Activated CD4-positive, alpha-beta T cell treated with anti-CD3 and anti-CD28 coated beads for 36 hours (primary cell): ENCODE measurements at regions of chr1 and their contacts with region 1.

Region 1: DNA sequence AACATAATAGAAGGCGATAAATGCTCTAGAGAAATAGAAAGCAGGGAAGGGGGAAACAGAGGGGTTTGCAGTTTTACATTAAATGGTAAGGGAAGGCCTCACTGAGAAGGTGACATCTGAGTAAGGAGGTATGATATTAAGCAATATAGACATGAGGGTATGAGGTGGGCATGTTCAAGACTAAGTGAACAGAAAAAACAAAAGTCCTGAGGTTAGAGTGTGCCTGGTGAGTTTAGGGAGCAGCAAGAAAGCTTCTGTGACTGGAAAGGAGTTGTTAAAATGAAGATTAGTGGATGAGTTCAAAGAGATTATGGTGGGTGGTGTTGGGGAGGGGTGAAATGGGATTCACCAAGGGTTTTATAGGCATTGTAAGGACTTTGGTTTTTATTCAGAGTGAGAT is 8.6 kb downstream of the RPRD2 start:
- DNase-seq: no peak
- ATAC-seq: peak; percentile 69
- H3K4me3 Mint-ChIP-seq: no peak overlapping the region
- H3K27ac Mint-ChIP-seq: peak overlapping the region; percentile 80
- H3K4me1 Mint-ChIP-seq: peaks cover 76% of the 10 kb centered on the region
- H3K27me3 Mint-ChIP-seq: no peaks in the 10 kb centered on the region

Region 2: GRCh38 chr1:149995951-149996350 is 376.6 kb before region 1 on chr1:
- CTCF ChIA-PET with region 1: no interaction called
- POLR2A ChIA-PET with region 1: no interaction called
- intact Hi-C with region 1: no loop called
- DNase-seq: peak; percentile 39
- ATAC-seq: peak; percentile 92
- H3K4me3 Mint-ChIP-seq: peak overlapping the region; percentile 20
- H3K27ac Mint-ChIP-seq: peak overlapping the region; percentile 80
- H3K4me1 Mint-ChIP-seq: peaks cover 46% of the 10 kb centered on the region
- H3K27me3 Mint-ChIP-seq: no peaks in the 10 kb centered on the region

Region 3: GRCh38 chr1:150387200-150387599 is 14.6 kb after region 1 on chr1:
- CTCF ChIA-PET with region 1: interaction called, 10 read pairs
- POLR2A ChIA-PET with region 1: interaction called, 3 read pairs
- intact Hi-C with region 1: no loop called
- DNase-seq: no peak
- ATAC-seq: no peak
- H3K4me3 Mint-ChIP-seq: no peak overlapping the region
- H3K27ac Mint-ChIP-seq: peak overlapping the region; percentile 74
- H3K4me1 Mint-ChIP-seq: peaks cover 53% of the 10 kb centered on the region
- H3K27me3 Mint-ChIP-seq: no peaks in the 10 kb centered on the region